GM12878 (cell line): ENCODE measurements at regions of chr7 and their contacts with region 1.

Region 1: GRCh38 chr7:83936056-83936708 is 258.4 kb downstream of the SEMA3A start:
- DNase-seq: no peak
- ATAC-seq: peak; percentile 92
- H3K4me3 ChIP-seq: no peak overlapping the region
- H3K27ac ChIP-seq: no peak overlapping the region
- H3K4me1 ChIP-seq: no peaks in the 10 kb centered on the region
- H3K27me3 ChIP-seq: no peaks in the 10 kb centered on the region; a peak in 1 of 4 replicates
- CTCF ChIP-seq: peak; percentile 81 to 88 (median 88)
- EP300 ChIP-seq: no peak
- POLR2A ChIP-seq: no peak
- RAD21 ChIP-seq: peak; percentile 95

Region 2: GRCh38 chr7:83410989-83411591 is 525.1 kb before region 1 on chr7:
- CTCF ChIA-PET with region 1: interaction called, 3 read pairs
- POLR2A ChIA-PET with region 1: no interaction called
- RAD21 ChIA-PET with region 1: no interaction called
- SMC1A ChIA-PET with region 1: no interaction called
- in situ Hi-C with region 1: no loop called
- intact Hi-C with region 1: loop called (anchors 5 kb)
- DNase-seq: no peak
- ATAC-seq: peak; percentile 52; the same call in 1 of the 3 replicates
- H3K4me3 ChIP-seq: no peak overlapping the region
- H3K27ac ChIP-seq: no peak overlapping the region
- H3K4me1 ChIP-seq: no peaks in the 10 kb centered on the region
- H3K27me3 ChIP-seq: no peaks in the 10 kb centered on the region
- CTCF ChIP-seq: peak; percentile 47 to 63 (median 51); a peak in 5 of 6 replicates
- EP300 ChIP-seq: no peak
- POLR2A ChIP-seq: no peak
- RAD21 ChIP-seq: peak; percentile 89

Region 3: GRCh38 chr7:83925860-83926259 is 10.3 kb before region 1 on chr7:
- CTCF ChIA-PET with region 1: interaction called, 11 read pairs
- POLR2A ChIA-PET with region 1: no interaction called
- RAD21 ChIA-PET with region 1: no interaction called
- SMC1A ChIA-PET with region 1: interaction called, 10 read pairs
- in situ Hi-C with region 1: no loop called
- intact Hi-C with region 1: no loop called
- DNase-seq: no peak
- ATAC-seq: peak; percentile 74
- H3K4me3 ChIP-seq: no peak overlapping the region
- H3K27ac ChIP-seq: no peak overlapping the region
- H3K4me1 ChIP-seq: no peaks in the 10 kb centered on the region
- H3K27me3 ChIP-seq: no peaks in the 10 kb centered on the region
- CTCF ChIP-seq: no peak
- EP300 ChIP-seq: no peak; a peak in 1 of 4 replicates
- POLR2A ChIP-seq: no peak
- RAD21 ChIP-seq: no peak

Region 4: GRCh38 chr7:83957333-83957732 is 21.2 kb after region 1 on chr7:
- CTCF ChIA-PET with region 1: interaction called, 19 read pairs
- POLR2A ChIA-PET with region 1: no interaction called
- RAD21 ChIA-PET with region 1: interaction called, 5 read pairs
- SMC1A ChIA-PET with region 1: interaction called, 26 read pairs
- in situ Hi-C with region 1: no loop called
- intact Hi-C with region 1: no loop called
- DNase-seq: no peak
- ATAC-seq: no peak
- H3K4me3 ChIP-seq: no peak overlapping the region
- H3K27ac ChIP-seq: no peak overlapping the region
- H3K4me1 ChIP-seq: no peaks in the 10 kb centered on the region
- H3K27me3 ChIP-seq: no peaks in the 10 kb centered on the region
- CTCF ChIP-seq: no peak
- EP300 ChIP-seq: no peak
- POLR2A ChIP-seq: no peak
- RAD21 ChIP-seq: no peak

Region 5: GRCh38 chr7:84188786-84189405 is 252.7 kb after region 1 on chr7:
- CTCF ChIA-PET with region 1: interaction called, 16 read pairs
- POLR2A ChIA-PET with region 1: no interaction called
- RAD21 ChIA-PET with region 1: interaction called, 3 read pairs
- SMC1A ChIA-PET with region 1: interaction called, 4 read pairs
- in situ Hi-C with region 1: no loop called
- intact Hi-C with region 1: no loop called
- DNase-seq: no peak
- ATAC-seq: peak; percentile 46
- H3K4me3 ChIP-seq: no peak overlapping the region
- H3K27ac ChIP-seq: no peak overlapping the region
- H3K4me1 ChIP-seq: no peaks in the 10 kb centered on the region
- H3K27me3 ChIP-seq: no peaks in the 10 kb centered on the region
- CTCF ChIP-seq: peak in 1 of 3 experiments; percentile 19; a peak in 2 of 6 replicates
- EP300 ChIP-seq: no peak
- POLR2A ChIP-seq: no peak
- RAD21 ChIP-seq: peak; percentile 45; the same call in 1 of the 2 replicates

Region 6: DNA sequence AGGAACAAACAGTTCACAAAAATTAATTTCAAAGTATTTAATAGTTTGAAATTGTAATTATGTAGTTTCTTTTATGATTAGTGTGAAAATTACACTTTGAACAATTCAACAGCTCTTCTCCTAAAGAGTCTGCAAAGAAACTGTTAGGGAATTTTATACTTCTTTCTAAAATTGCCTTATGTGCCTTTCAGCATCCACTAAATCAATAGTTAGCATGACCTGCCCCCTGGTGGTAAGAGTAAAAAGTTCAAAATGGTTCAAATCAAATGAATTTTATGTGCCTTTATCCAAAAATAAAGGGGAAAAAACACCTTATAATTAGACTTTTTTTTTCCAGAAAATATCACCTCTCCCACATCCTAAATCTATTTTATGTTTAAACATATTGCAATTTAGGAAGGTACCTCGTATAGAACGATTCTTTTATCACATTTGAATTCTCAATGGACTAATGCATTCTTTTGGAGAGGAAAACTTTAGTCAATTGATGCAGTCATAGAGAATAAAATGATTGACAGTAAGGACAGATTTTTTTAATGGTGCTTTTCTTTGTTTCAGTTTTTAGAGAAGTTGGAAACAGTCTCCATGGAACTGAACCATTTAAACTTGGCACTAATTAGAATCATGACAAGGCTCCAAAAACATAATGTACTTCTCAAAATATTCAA is 1087.0 kb after region 1 on chr7:
- CTCF ChIA-PET with region 1: interaction called, 186 read pairs
- POLR2A ChIA-PET with region 1: no interaction called
- RAD21 ChIA-PET with region 1: interaction called, 79 read pairs
- SMC1A ChIA-PET with region 1: interaction called, 116 read pairs
- in situ Hi-C with region 1: no loop called
- intact Hi-C with region 1: loop called (anchors 1 kb)
- DNase-seq: no peak
- ATAC-seq: 0 out of 3 replicates have a peak, but pooled peaks have one; percentile 42
- H3K4me3 ChIP-seq: no peak overlapping the region
- H3K27ac ChIP-seq: no peak overlapping the region
- H3K4me1 ChIP-seq: no peaks in the 10 kb centered on the region; the same call in 1 of the 2 replicates
- H3K27me3 ChIP-seq: no peaks in the 10 kb centered on the region
- CTCF ChIP-seq: peak; percentile 42 to 62 (median 52); a peak in 4 of 6 replicates
- EP300 ChIP-seq: no peak
- POLR2A ChIP-seq: no peak
- RAD21 ChIP-seq: peak; percentile 83